Activated CD8-positive, alpha-beta T cell treated with anti-CD3 and anti-CD28 coated beads, Interleukin-2, amount 10 ng/mL, durations not matched to agents 7 days and 5 days (primary cell): ENCODE measurements at regions of chr5 and their contacts with region 1.

Region 1: GRCh38 chr5:52948418-52949076 is 40.6 kb upstream of the ITGA2 start:
- DNase-seq: peak; percentile 85
- ATAC-seq: peak; percentile 92
- H3K4me3 Mint-ChIP-seq: no peak overlapping the region
- H3K27ac Mint-ChIP-seq: peak overlapping the region; percentile 21
- H3K4me1 Mint-ChIP-seq: peaks cover 38% of the 10 kb centered on the region
- H3K27me3 Mint-ChIP-seq: no peaks in the 10 kb centered on the region

Region 2: DNA sequence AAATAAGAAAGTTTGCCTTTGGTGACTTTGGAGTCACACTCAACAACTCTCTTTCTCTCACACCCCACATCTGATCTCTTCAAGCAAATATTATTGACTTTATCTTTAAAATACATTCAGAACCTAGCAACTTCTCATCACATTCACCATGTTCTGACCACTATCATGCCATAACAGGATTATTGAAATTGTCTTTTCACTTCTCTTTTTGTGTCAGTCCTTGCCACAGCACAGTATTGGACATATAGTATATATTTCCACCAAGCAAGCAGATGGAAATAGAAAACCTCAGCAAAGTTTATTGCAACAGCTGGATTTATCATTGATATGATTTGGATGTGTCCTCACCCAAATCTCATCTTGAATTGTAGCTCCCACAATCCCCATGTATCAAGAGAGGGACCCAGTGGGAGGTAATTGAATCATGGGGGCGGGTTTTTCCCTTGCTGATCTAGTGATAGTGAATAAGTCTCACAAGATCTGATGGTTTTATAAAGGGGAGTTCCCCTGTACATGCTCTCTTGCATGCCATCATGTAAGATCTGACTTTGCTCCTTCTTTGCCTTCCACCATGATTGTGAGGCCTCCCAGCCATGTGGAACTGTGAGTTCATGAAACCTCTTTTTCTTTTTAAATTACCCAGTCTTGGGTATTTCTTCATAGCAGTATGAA is 187.7 kb before region 1 on chr5:
- CTCF ChIA-PET with region 1: no interaction called
- POLR2A ChIA-PET with region 1: no interaction called
- DNase-seq: no peak
- ATAC-seq: no peak
- H3K4me3 Mint-ChIP-seq: no peak overlapping the region
- H3K27ac Mint-ChIP-seq: no peak overlapping the region
- H3K4me1 Mint-ChIP-seq: peaks cover 10% of the 10 kb centered on the region
- H3K27me3 Mint-ChIP-seq: no peaks in the 10 kb centered on the region

Region 3: GRCh38 chr5:52895572-52896413 is 52.8 kb before region 1 on chr5:
- CTCF ChIA-PET with region 1: no interaction called
- POLR2A ChIA-PET with region 1: no interaction called
- DNase-seq: no peak
- ATAC-seq: no peak
- H3K4me3 Mint-ChIP-seq: no peak overlapping the region
- H3K27ac Mint-ChIP-seq: no peak overlapping the region
- H3K4me1 Mint-ChIP-seq: peaks cover 3% of the 10 kb centered on the region
- H3K27me3 Mint-ChIP-seq: no peaks in the 10 kb centered on the region

Region 4: GRCh38 chr5:52989781-52990527 is 41.4 kb after region 1 on chr5:
- CTCF ChIA-PET with region 1: interaction called, 81 read pairs
- POLR2A ChIA-PET with region 1: no interaction called
- DNase-seq: peak; percentile 56
- ATAC-seq: peak; percentile 63
- H3K4me3 Mint-ChIP-seq: peak overlapping the region; percentile 78
- H3K27ac Mint-ChIP-seq: peak overlapping the region; percentile 33
- H3K4me1 Mint-ChIP-seq: peaks cover 30% of the 10 kb centered on the region
- H3K27me3 Mint-ChIP-seq: peaks cover 32% of the 10 kb centered on the region

Region 5: GRCh38 chr5:53035868-53036381 is 87.4 kb after region 1 on chr5:
- CTCF ChIA-PET with region 1: interaction called, 45 read pairs
- POLR2A ChIA-PET with region 1: no interaction called
- DNase-seq: no peak
- ATAC-seq: no peak
- H3K4me3 Mint-ChIP-seq: no peak overlapping the region
- H3K27ac Mint-ChIP-seq: no peak overlapping the region
- H3K4me1 Mint-ChIP-seq: peaks cover 77% of the 10 kb centered on the region
- H3K27me3 Mint-ChIP-seq: no peaks in the 10 kb centered on the region

Region 6: GRCh38 chr5:53055359-53055758 is 106.8 kb after region 1 on chr5:
- CTCF ChIA-PET with region 1: interaction called, 13 read pairs
- POLR2A ChIA-PET with region 1: no interaction called
- DNase-seq: no peak
- ATAC-seq: no peak
- H3K4me3 Mint-ChIP-seq: no peak overlapping the region
- H3K27ac Mint-ChIP-seq: no peak overlapping the region
- H3K4me1 Mint-ChIP-seq: no peaks in the 10 kb centered on the region
- H3K27me3 Mint-ChIP-seq: peaks cover 11% of the 10 kb centered on the region

Region 7: DNA sequence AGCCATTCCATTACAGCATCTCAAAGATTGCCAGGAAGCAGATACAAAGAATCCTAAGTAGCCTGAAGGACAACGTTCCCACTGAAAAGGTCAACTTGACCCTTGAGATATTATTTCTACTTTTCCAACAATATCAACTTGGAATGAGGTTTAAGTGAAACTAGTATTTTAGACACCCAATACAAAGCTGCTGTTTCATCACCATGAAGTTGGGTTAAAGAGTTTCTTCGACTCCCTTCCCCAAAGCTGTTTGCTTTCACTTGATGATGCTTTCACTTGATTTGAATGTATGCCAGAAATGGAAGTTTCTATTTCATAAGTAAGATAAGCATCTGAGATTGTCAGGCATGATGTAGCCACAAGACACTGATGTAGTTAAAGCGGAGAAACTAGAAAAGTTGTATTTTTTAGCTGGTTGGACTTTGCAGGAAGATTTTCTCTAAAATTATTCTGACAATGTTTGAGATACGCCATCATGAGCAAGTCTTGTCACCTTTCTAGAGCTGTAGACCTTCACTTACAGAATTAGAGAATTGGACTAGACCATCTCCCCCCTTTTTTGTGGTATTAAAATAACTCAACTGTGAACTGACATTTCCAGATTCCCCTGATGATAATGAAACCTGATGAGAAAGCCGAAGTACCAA is 140.9 kb after region 1 on chr5:
- CTCF ChIA-PET with region 1: interaction called, 282 read pairs
- POLR2A ChIA-PET with region 1: interaction called, 4 read pairs
- DNase-seq: no peak
- ATAC-seq: peak; percentile 57
- H3K4me3 Mint-ChIP-seq: peak overlapping the region; percentile 29
- H3K27ac Mint-ChIP-seq: peak overlapping the region; percentile 61
- H3K4me1 Mint-ChIP-seq: peaks cover 54% of the 10 kb centered on the region
- H3K27me3 Mint-ChIP-seq: no peaks in the 10 kb centered on the region